Sigmoid colon (tissue), 7 donors: ENCODE measurements at regions of chr9 and their contacts with region 1.

Region 1: GRCh38 chr9:100426530-100427428 is at the start of gene MSANTD3:
- DNase-seq: peak; percentile 77
- H3K4me3 ChIP-seq: peak within 1 kb of the TSS; percentile 83 to 96 (median 92)
- H3K27ac ChIP-seq: peak within 1 kb of the TSS; percentile 92 to 98 (median 96)
- H3K4me1 ChIP-seq: peaks cover 0 to 39% (median 32%) of the 10 kb centered on the region in 4 donors
- H3K27me3 ChIP-seq: no peaks in the 10 kb centered on the region
- CTCF ChIP-seq: peak in 1 of 4 experiments; percentile 18
- EP300 ChIP-seq: no peak
- POLR2A ChIP-seq: no peak
- total RNA-seq, gene MSANTD3: 25.2 to 41.8 (median 31.5) TPM

Region 2: DNA sequence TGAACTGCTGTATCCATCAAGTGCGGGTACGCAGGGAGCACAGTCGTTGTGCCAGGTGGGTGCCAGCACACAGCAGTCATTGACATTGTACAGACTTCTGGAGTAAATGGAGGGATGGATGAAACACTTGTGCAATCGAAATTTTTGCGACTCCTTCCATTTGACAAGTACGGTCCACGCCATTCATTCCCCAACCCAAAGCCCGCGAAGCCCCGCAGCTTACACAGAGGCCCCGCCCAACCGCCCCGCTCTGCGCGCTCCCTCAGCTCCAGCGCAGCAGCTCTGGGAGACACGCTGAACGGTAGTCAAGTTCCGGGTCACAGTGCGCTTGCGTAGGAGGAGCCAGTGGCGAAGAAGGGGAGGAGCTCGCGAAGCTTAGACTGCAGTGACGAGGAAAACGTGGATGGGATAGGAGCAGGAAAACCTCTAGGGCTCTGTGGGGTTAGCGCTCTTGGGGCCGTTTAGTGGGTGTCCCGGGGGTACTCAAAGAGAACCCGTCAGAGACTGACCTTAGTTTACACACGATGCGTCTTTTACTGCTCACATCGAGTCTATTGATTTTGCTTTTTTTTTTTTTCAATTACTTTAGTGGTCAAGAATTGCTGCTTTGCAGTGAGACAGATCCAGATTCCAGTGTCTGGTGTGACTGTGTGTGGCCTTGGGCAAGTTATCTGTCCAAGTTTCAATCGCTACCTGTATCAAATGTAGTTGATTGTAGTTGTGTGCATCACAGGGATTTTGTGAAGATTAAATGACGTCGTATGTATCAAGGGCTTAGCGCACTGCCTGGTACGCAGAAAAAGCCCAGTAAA is 15.1 kb before region 1 on chr9:
- intact Hi-C with region 1: loop called (anchors 2 kb)
- DNase-seq: peak; percentile 95
- H3K4me3 ChIP-seq: peak overlapping the region; percentile 31 to 52 (median 50)
- H3K27ac ChIP-seq: peak overlapping the region; percentile 49 to 68 (median 52)
- H3K4me1 ChIP-seq: peaks cover 0 to 10% (median 4%) of the 10 kb centered on the region in 4 donors
- H3K27me3 ChIP-seq: no peaks in the 10 kb centered on the region
- CTCF ChIP-seq: no peak
- EP300 ChIP-seq: no peak
- POLR2A ChIP-seq: no peak

Region 3: GRCh38 chr9:100477241-100477640 is 50.5 kb after region 1 on chr9:
- intact Hi-C with region 1: no loop called
- DNase-seq: no peak
- H3K4me3 ChIP-seq: no peak overlapping the region
- H3K27ac ChIP-seq: no peak overlapping the region
- H3K4me1 ChIP-seq: peaks cover 0 to 14% (median 13%) of the 10 kb centered on the region in 4 donors
- H3K27me3 ChIP-seq: peaks cover 0 to 11% (median 8%) of the 10 kb centered on the region in 3 donors
- CTCF ChIP-seq: no peak
- EP300 ChIP-seq: no peak
- POLR2A ChIP-seq: no peak